HAP-1 (cell line): ENCODE measurements at regions of chr20 and their contacts with region 1.

Region 1: DNA sequence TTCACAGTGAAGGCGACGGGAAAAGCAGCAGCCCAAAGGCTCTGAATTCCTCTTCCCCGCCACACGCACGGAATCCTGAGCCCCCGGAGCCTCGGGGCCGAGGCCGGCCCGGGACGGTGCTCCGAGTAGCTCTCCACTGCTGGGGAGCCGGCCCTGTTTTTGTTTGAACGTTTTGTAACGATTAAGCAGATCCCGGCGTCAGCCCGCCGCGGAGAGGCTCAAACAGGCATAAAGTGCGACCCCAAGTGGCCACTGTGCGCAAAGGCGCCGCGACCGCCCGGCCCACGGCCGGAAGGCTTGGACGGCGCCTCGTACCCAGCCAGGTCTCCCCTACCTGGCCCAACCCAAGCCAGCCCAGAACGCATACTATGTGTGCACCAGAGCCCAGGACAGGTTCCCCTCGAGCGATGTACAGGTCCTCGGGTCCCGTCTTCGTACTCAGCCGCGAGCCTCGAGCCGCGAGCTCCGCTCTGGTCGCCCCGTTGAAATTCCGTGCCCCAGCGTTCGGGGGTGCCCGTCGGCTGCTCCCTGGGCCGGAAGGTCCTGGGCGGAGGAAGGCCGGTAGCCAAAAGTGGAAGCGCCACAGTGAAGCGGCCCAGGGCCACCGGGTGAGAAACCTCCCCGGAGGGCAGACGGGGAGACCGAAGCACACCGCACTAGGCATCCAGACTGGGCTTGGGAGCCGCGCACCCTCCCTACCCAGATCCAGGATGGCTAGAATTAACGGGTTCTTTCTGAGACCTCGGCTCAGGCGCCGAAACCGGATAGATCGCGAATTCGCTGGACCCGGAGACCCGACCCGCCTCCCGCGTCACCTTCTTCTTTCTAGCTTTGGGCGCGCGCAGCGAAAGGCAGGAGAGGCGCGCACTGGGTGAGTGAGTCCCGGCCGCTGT is 1.2 kb upstream of the MAFB start:
- DNase-seq: peak; percentile 65 to 87
- H3K4me3 ChIP-seq: peak overlapping the region; percentile 22
- H3K4me1 ChIP-seq: peaks cover 2% of the 10 kb centered on the region; the same call in 1 of the 2 replicates
- H3K27me3 ChIP-seq: peaks cover 43% of the 10 kb centered on the region

Region 2: GRCh38 chr20:39112178-39112743 is 1577.9 kb before region 1 on chr20:
- in situ Hi-C with region 1: loop called (anchors 25 kb)
- DNase-seq: peak; percentile 45 to 57
- H3K4me3 ChIP-seq: no peak overlapping the region
- H3K4me1 ChIP-seq: no peaks in the 10 kb centered on the region
- H3K27me3 ChIP-seq: peaks cover 9% of the 10 kb centered on the region

Region 3: GRCh38 chr20:39264506-39265172 is 1425.5 kb before region 1 on chr20:
- in situ Hi-C with region 1: loop called (anchors 10 kb)
- DNase-seq: peak; percentile 37 to 64
- H3K4me3 ChIP-seq: no peak overlapping the region
- H3K4me1 ChIP-seq: no peaks in the 10 kb centered on the region
- H3K27me3 ChIP-seq: no peaks in the 10 kb centered on the region